AG04450 (cell line): ENCODE measurements at regions of chr1 and their contacts with region 1.

Region 1: GRCh38 chr1:218330043-218330623 is 15.0 kb upstream of the TGFB2 start:
- DNase-seq: no peak
- H3K4me3 ChIP-seq: no peak overlapping the region
- H3K27ac ChIP-seq: no peak overlapping the region
- H3K27me3 ChIP-seq: no peaks in the 10 kb centered on the region
- CTCF ChIP-seq: peak; percentile 55

Region 2: GRCh38 chr1:218312509-218312908 is 17.6 kb before region 1 on chr1:
- CTCF ChIA-PET with region 1: interaction called, 10 read pairs
- POLR2A ChIA-PET with region 1: no interaction called
- DNase-seq: no peak
- H3K4me3 ChIP-seq: no peak overlapping the region
- H3K27ac ChIP-seq: no peak overlapping the region
- H3K27me3 ChIP-seq: no peaks in the 10 kb centered on the region
- CTCF ChIP-seq: no peak

Region 3: DNA sequence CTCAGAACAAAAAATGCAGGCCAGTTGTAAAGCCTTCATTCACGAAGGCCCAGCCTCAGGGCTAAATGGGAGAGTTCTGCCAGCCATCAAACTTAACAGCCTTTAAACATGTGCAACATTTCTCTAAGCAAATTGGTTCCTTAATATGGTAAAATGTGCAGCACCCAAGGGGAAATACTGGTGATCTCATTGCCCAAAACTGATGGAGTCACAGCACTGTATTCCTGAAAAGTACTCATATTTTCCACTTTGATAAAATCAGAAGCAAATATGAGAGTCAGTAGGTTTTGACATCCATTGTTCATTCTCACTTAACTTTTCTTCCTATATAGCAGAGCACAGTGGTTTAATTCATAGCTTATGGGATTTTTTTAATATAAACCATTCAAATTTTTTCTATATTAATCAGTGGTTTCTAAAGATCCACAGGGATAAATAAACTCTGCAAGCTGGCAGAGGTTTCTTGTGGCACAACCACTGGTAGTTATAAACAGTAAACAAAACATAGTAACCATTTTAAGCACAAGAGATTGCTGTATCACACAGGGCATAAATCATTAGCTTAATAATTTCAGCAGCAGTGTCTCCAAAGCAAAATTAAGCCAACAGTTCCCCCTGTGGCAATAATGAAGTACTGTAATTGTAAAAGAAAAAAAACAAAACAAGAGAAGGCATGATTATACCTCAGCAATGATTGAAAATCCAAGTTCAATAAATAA is 736.7 kb after region 1 on chr1:
- CTCF ChIA-PET with region 1: interaction called, 34 read pairs
- POLR2A ChIA-PET with region 1: no interaction called
- DNase-seq: no peak
- H3K4me3 ChIP-seq: no peak overlapping the region
- H3K27ac ChIP-seq: peak overlapping the region; percentile 54
- H3K27me3 ChIP-seq: no peaks in the 10 kb centered on the region
- CTCF ChIP-seq: peak; percentile 60

Region 4: GRCh38 chr1:219385786-219386427 is 1055.8 kb after region 1 on chr1:
- CTCF ChIA-PET with region 1: interaction called, 16 read pairs
- POLR2A ChIA-PET with region 1: no interaction called
- DNase-seq: no peak
- H3K4me3 ChIP-seq: no peak overlapping the region
- H3K27ac ChIP-seq: no peak overlapping the region
- H3K27me3 ChIP-seq: no peaks in the 10 kb centered on the region
- CTCF ChIP-seq: peak; percentile 83

Region 5: GRCh38 chr1:219566951-219567947 is 1237.1 kb after region 1 on chr1:
- CTCF ChIA-PET with region 1: interaction called, 50 read pairs
- POLR2A ChIA-PET with region 1: no interaction called
- DNase-seq: no peak
- H3K4me3 ChIP-seq: no peak overlapping the region
- H3K27ac ChIP-seq: no peak overlapping the region
- H3K27me3 ChIP-seq: peaks cover 2% of the 10 kb centered on the region
- CTCF ChIP-seq: peak; percentile 73

Region 6: DNA sequence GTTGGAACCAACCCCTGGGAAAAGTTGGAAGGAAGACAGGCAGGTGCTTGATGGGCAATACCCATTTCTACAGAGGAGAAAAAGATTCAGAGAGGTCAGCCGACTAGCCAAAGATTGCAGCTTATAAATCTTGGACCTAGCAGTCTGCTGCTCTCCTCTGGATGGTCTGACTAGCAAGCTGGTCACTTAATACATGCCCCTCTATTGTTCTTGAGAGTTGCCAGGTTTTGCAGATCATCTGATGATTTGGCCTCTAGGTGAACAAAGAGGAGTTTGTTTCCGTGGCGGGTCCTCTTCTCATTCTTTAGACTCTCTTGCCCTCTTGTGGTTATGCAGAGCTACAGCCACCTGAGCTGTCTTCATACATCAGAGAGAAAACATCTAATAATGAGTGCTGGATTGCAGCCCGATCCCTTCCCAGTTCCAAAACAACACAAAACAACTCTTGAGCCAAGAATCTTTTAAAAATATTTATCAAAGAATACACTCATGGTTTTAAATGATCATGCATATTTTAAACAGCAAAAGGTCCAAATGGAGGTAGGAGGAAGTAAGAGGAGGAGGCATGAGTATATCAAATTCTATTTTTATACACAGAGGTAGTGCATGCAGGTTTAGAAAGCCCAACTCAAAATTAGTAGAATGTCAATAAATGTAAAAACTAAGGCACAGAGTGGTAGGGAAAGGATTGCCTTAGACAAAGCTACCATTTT is 1482.5 kb after region 1 on chr1:
- CTCF ChIA-PET with region 1: interaction called, 36 read pairs
- POLR2A ChIA-PET with region 1: no interaction called
- DNase-seq: peak; percentile 54
- H3K4me3 ChIP-seq: no peak overlapping the region
- H3K27ac ChIP-seq: no peak overlapping the region
- H3K27me3 ChIP-seq: peaks cover 23% of the 10 kb centered on the region
- CTCF ChIP-seq: peak; percentile 95